Psoas muscle (tissue), 8 donors: ENCODE measurements at regions of chr1 and their contacts with region 1.

Region 1: GRCh38 chr1:6460301-6461050 is 5.5 kb downstream of the TNFRSF25 start:
- DNase-seq: no peak
- ATAC-seq: no peak
- H3K4me3 ChIP-seq: peak overlapping the region; percentile 11
- H3K27ac ChIP-seq: no peak overlapping the region
- H3K4me1 ChIP-seq: no peaks in the 10 kb centered on the region
- H3K27me3 ChIP-seq: peaks cover 0 to 59% (median 13%) of the 10 kb centered on the region in 3 donors
- CTCF ChIP-seq: no peak

Region 2: GRCh38 chr1:6414443-6414844 is 46.0 kb before region 1 on chr1:
- intact Hi-C with region 1: no loop called
- DNase-seq: no peak
- ATAC-seq: peak in 1 of 4 donors; percentile 34
- H3K4me3 ChIP-seq: no peak overlapping the region
- H3K27ac ChIP-seq: no peak overlapping the region
- H3K4me1 ChIP-seq: peaks cover 5% of the 10 kb centered on the region
- H3K27me3 ChIP-seq: peaks cover 0 to 74% (median 32%) of the 10 kb centered on the region in 3 donors
- CTCF ChIP-seq: no peak

Region 3: GRCh38 chr1:6447818-6448748 is 12.4 kb before region 1 on chr1:
- intact Hi-C with region 1: loop called in 1 of 2 experiments (anchors 1 kb)
- DNase-seq: no peak
- ATAC-seq: peak in 1 of 4 donors; percentile 24
- H3K4me3 ChIP-seq: no peak overlapping the region
- H3K27ac ChIP-seq: no peak overlapping the region
- H3K4me1 ChIP-seq: no peaks in the 10 kb centered on the region
- H3K27me3 ChIP-seq: peaks cover 0 to 74% (median 17%) of the 10 kb centered on the region in 3 donors
- CTCF ChIP-seq: no peak

Region 4: GRCh38 chr1:6519935-6520671 is 59.6 kb after region 1 on chr1:
- intact Hi-C with region 1: no loop called
- DNase-seq: peak in 1 of 2 donors; percentile 59
- ATAC-seq: peak; percentile 34 to 60 (median 55)
- H3K4me3 ChIP-seq: no peak overlapping the region
- H3K27ac ChIP-seq: no peak overlapping the region
- H3K4me1 ChIP-seq: peaks cover 9% of the 10 kb centered on the region
- H3K27me3 ChIP-seq: no peaks in the 10 kb centered on the region
- CTCF ChIP-seq: no peak